ENCODE measurements at regions of chr7 and their contacts with region 1.

Region 1: DNA sequence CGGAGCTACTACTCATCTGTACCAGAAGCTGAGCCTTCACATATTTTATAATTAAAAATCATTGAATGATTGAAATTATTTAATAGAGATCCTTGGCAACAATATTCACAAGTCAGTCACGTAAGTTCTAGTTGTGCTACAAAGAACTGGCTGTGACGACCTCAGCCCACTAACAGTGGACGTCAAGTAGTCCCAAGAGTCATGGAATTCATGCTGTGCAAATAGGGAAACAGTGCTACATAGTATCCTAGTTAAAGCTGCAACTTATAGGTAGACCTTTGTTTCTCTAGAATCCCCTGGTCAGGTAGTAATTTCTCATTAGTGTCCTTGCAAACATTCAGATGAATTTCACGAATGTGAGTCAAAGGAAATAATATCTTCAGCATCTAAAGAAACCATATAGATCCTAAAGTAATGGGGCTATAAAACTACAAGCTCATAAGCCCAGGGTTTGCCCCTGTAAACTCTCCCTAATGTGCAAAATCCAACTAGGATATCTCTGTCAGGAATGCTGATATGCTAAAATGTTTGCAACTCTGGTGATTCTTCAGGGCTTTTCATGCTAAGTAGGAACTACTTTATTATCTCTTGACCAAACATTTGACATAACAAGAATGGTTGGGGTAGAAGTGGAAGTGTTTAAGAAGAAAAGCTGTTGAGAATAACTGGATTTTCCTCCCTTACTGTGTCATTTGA is 31.2 kb downstream of the CFAP69 start:
- DNase-seq: peak; percentile 72 to 75
- H3K4me3 ChIP-seq: no peak overlapping the region
- H3K4me3 Mint-ChIP-seq: peak overlapping the region; percentile 56
- H3K27ac Mint-ChIP-seq: peak overlapping the region; percentile 87
- H3K4me1 ChIP-seq: peaks cover 76% of the 10 kb centered on the region
- H3K4me1 Mint-ChIP-seq: peaks cover 11% of the 10 kb centered on the region
- H3K27me3 ChIP-seq: no peaks in the 10 kb centered on the region
- H3K27me3 Mint-ChIP-seq: no peaks in the 10 kb centered on the region
- CTCF ChIP-seq: no peak

Region 2: DNA sequence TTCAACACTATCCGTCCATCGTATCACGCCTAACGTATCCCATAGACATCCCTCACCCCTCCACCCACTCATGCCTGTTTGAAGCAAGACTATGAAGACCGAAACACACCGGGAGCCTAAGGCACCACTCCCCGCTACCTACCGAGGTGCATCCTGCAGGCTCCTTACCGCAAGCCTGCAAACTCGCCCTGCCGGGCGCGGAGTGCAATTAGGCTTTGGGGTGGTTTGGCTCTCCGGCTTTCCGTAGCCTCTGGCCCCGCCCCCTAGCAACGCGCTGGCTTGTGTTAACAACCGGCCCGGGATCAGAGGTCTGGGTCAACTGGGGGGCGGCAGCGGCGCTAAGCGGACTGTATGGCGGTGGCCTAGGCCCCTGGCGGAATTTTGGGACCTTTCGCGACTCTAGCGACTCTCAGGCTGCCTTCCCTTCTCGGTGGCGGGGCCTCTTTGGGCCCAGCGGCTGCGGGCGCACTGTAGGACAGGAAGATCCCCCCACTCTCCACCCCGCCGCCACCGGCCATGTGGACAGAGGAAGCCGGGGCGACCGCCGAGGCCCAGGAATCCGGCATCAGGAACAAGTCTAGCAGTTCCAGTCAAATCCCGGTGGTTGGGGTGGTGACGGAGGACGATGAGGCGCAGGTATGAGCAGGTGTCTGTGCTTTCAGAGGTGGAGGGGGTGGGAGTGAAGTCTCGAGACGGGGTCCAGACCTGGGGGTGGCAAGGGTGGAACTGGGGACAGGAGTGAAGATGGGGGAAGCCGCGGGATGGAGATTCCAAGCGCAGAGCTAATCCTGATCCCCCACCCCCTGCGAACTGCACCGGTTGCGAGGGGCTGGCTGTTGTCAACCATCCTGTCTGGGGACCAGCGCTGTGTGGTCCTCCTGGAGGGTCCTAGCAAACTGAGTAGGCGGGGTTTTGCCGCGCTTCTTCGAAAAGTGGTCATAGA is 31.0 kb before region 1 on chr7 and contains the start of gene CFAP69:
- CTCF ChIA-PET with region 1: no interaction called
- POLR2A ChIA-PET with region 1: no interaction called
- intact Hi-C with region 1: loop called (anchors 2 kb)
- DNase-seq: peak; percentile 92 to 95
- H3K4me3 ChIP-seq: peak within 1 kb of the TSS; percentile 57
- H3K4me3 Mint-ChIP-seq: peak within 1 kb of the TSS; percentile 87
- H3K27ac Mint-ChIP-seq: peak within 1 kb of the TSS; percentile 91
- H3K4me1 ChIP-seq: peaks cover 40% of the 10 kb centered on the region
- H3K4me1 Mint-ChIP-seq: peaks cover 12% of the 10 kb centered on the region
- H3K27me3 ChIP-seq: no peaks in the 10 kb centered on the region
- H3K27me3 Mint-ChIP-seq: no peaks in the 10 kb centered on the region
- CTCF ChIP-seq: peak; percentile 21 to 26
- total RNA-seq, gene CFAP69: 4.8 and 7.4 TPM in 2 replicates

Region 3: DNA sequence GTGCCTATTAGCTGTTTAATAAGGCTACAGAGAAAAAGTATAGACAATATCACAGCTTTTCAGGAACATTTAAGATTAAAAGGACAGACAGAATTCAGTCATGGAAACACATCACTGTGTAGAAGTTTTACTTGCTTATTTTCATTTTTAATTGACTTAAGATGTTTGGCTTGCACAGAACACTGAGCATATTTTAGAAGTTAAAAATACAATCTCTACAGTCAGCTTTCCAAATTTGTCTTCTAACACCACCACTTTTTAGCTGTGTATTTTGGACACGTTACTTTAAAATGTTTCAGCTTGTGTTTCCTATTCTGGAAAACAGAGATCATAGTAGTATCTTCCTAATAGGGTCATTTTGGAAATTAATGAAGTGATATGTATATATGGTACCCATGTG is 19.4 kb before region 1 on chr7:
- CTCF ChIA-PET with region 1: no interaction called
- POLR2A ChIA-PET with region 1: no interaction called
- intact Hi-C with region 1: no loop called
- DNase-seq: no peak
- H3K4me3 ChIP-seq: no peak overlapping the region
- H3K4me3 Mint-ChIP-seq: no peak overlapping the region
- H3K27ac Mint-ChIP-seq: no peak overlapping the region
- H3K4me1 ChIP-seq: no peaks in the 10 kb centered on the region
- H3K4me1 Mint-ChIP-seq: no peaks in the 10 kb centered on the region
- H3K27me3 ChIP-seq: no peaks in the 10 kb centered on the region
- H3K27me3 Mint-ChIP-seq: no peaks in the 10 kb centered on the region
- CTCF ChIP-seq: no peak

Region 4: DNA sequence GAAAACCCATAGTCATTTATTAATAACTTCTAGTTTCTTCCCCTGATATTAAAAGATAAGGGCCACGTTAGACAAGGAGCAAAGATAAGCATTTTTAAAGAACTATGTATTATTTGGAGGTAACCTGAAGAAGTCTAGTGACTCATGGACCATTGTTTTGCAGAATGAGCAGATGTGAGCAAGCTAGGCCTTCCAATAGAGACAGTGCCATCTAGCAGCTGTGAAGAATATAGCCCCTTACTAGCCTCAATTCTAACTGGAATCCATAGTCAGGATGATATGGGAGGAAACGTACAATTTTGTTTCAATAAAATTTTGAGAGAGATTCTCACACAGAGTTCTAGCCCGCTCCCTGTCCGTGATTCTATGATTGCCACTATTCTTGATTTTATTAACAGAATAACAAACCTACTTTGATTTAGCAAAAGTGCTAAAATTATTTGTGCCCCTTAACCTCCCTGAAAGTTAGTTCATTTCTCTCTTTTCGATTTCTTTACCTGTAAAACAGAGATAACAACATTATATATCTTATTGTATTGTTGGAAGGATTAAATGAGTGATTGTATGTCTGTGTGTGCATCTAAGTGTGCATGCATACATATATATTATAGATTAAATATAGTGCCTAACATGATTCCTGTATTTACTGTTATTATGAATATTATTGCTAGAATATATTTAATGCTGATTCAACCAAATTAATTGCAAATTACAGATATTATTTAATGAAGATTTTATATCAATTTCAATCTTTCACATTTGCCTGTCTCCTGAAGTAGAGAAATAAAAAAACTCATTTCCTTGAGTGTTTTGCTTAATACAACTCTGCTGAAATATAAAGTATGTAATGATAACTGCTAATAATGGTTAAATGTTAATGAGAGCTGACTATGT is 22.2 kb after region 1 on chr7:
- CTCF ChIA-PET with region 1: interaction called, 8 read pairs
- POLR2A ChIA-PET with region 1: no interaction called
- intact Hi-C with region 1: loop called (anchors 1 kb)
- DNase-seq: peak; percentile 41 to 52
- H3K4me3 ChIP-seq: no peak overlapping the region
- H3K4me3 Mint-ChIP-seq: no peak overlapping the region
- H3K27ac Mint-ChIP-seq: no peak overlapping the region
- H3K4me1 ChIP-seq: peaks cover 18% of the 10 kb centered on the region
- H3K4me1 Mint-ChIP-seq: peaks cover 15% of the 10 kb centered on the region
- H3K27me3 ChIP-seq: no peaks in the 10 kb centered on the region
- H3K27me3 Mint-ChIP-seq: no peaks in the 10 kb centered on the region
- CTCF ChIP-seq: peak; percentile 67 to 84

Region 5: GRCh38 chr7:90346336-90347125 is 70.3 kb after region 1 on chr7 and contains the start of gene GTPBP10:
- CTCF ChIA-PET with region 1: no interaction called
- POLR2A ChIA-PET with region 1: no interaction called
- intact Hi-C with region 1: loop called (anchors 1 kb)
- DNase-seq: peak; percentile 93 to 94
- H3K4me3 ChIP-seq: peak within 1 kb of the TSS; percentile 86
- H3K4me3 Mint-ChIP-seq: peak within 1 kb of the TSS; percentile 86
- H3K27ac Mint-ChIP-seq: peak within 1 kb of the TSS; percentile 94
- H3K4me1 ChIP-seq: peaks cover 15% of the 10 kb centered on the region
- H3K4me1 Mint-ChIP-seq: peaks cover 32% of the 10 kb centered on the region
- H3K27me3 ChIP-seq: no peaks in the 10 kb centered on the region
- H3K27me3 Mint-ChIP-seq: no peaks in the 10 kb centered on the region
- CTCF ChIP-seq: peak; percentile 67 to 82
- total RNA-seq, gene GTPBP10: 42.7 and 45.2 TPM in 2 replicates

Measured in Caco-2 (cell line).